ENCODE measurements at regions of chr16 and their contacts with region 1.

Region 1: DNA sequence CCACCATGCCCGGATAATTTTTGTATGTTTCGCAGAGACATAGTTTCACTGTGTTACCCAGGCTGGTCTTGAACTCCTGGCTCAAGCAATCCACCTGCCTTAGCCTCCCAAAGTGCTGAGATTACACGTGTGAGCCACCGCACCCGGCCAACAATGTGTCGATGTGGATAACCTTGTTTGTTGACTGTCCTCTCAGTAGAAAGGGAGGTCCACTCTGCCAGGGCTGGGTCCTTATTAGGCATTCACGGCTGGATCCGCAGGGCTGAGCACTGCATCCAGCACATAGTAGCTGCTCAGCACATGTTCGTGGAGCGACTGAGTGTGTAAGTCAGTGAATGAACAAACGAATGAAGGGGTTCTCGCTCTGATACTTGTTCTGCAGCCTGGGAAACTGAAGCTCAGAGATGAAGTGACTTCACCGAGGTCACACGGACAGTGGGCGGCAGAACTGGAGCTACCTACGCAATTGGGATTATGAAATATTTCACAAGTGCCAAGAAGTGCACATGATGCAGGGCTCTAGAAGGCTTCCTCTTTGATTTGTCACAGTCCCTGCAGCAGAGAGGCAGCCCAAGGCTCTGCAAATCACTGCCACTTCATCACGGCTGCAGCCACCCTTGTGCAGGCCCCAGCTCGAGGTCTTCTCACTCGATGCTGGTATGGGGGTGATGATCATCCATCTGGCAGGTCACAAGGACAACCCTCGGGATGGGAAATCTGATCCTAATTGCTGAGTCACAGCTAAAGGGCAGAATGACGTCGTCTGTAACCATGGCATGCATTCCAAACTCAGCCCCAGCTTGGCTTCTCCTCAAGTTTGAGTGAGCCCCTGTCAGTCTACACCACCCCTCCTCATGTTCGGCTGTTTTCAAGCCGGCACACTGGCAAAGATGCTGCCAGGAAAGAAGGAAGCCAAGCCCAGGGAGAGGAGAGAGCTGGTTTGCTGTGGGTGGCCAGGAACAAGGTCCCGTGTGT is 28.0 kb upstream of the SNN start:
- DNase-seq: peak; percentile 62
- H3K4me3 ChIP-seq: no peak overlapping the region
- H3K27ac ChIP-seq: peak overlapping the region; percentile 71 to 83 (median 79)
- H3K4me1 ChIP-seq: peaks cover 5 to 30% (median 17%) of the 10 kb centered on the region in 4 donors
- H3K27me3 ChIP-seq: no peaks in the 10 kb centered on the region
- CTCF ChIP-seq: no peak
- EP300 ChIP-seq: no peak
- POLR2A ChIP-seq: peak; percentile 41

Region 2: GRCh38 chr16:10812312-10813098 is 827.7 kb before region 1 on chr16:
- in situ Hi-C with region 1: no loop called
- intact Hi-C with region 1: no loop called
- DNase-seq: no peak
- H3K4me3 ChIP-seq: no peak overlapping the region
- H3K27ac ChIP-seq: no peak overlapping the region
- H3K4me1 ChIP-seq: no peaks in the 10 kb centered on the region
- H3K27me3 ChIP-seq: peaks cover under 1% of the 10 kb centered on the region
- CTCF ChIP-seq: no peak
- EP300 ChIP-seq: no peak
- POLR2A ChIP-seq: no peak

Region 3: DNA sequence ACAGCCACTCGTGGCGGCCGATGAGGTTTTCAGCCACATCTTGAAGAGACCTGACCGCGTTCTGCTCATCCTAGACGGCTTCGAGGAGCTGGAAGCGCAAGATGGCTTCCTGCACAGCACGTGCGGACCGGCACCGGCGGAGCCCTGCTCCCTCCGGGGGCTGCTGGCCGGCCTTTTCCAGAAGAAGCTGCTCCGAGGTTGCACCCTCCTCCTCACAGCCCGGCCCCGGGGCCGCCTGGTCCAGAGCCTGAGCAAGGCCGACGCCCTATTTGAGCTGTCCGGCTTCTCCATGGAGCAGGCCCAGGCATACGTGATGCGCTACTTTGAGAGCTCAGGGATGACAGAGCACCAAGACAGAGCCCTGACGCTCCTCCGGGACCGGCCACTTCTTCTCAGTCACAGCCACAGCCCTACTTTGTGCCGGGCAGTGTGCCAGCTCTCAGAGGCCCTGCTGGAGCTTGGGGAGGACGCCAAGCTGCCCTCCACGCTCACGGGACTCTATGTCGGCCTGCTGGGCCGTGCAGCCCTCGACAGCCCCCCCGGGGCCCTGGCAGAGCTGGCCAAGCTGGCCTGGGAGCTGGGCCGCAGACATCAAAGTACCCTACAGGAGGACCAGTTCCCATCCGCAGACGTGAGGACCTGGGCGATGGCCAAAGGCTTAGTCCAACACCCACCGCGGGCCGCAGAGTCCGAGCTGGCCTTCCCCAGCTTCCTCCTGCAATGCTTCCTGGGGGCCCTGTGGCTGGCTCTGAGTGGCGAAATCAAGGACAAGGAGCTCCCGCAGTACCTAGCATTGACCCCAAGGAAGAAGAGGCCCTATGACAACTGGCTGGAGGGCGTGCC is 733.1 kb before region 1 on chr16:
- in situ Hi-C with region 1: no loop called
- intact Hi-C with region 1: no loop called
- DNase-seq: no peak
- H3K4me3 ChIP-seq: no peak overlapping the region
- H3K27ac ChIP-seq: no peak overlapping the region
- H3K4me1 ChIP-seq: no peaks in the 10 kb centered on the region
- H3K27me3 ChIP-seq: no peaks in the 10 kb centered on the region
- CTCF ChIP-seq: no peak
- EP300 ChIP-seq: no peak
- POLR2A ChIP-seq: no peak

Region 4: DNA sequence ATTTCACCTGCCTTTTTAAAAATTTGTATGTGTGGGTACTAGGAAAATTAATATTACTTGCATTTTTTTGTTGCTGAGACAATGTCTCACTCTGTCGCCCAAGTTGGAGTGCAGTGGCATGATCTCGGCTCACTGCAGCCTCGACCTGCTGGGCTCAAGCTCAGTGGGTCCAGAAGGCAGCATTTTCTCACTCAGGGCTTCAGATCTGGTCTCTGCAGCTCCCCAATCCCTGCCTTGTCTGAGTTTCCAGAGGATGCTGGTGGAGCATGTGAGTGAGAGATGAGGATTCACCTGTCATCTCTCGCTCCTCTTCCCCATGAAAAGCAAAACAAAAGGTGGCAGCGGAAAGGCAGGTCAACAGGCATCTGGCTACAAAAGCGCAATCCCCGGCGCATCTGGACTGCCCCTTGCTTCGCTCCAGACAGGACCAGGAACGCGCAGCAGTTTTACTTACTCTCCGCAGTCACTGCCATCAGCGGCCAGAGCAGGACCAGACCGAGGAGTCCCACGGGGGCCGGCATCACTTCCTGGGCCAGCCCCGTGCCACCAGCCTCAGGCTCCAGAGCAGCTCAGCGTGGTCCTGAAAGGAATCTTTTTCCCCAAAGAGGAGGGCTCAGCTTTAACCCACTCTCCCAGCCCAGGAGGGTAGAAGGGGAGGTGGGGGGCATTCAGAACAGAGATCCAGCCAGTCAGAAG is 113.4 kb before region 1 on chr16:
- in situ Hi-C with region 1: loop called in 3 of 4 experiments (anchors 5 kb)
- intact Hi-C with region 1: no loop called
- DNase-seq: no peak
- H3K4me3 ChIP-seq: no peak overlapping the region
- H3K27ac ChIP-seq: no peak overlapping the region
- H3K4me1 ChIP-seq: no peaks in the 10 kb centered on the region
- H3K27me3 ChIP-seq: peaks cover 6% of the 10 kb centered on the region
- CTCF ChIP-seq: no peak
- EP300 ChIP-seq: no peak
- POLR2A ChIP-seq: no peak

Region 5: GRCh38 chr16:11535471-11535870 is 104.7 kb before region 1 on chr16:
- in situ Hi-C with region 1: loop called in 3 of 4 experiments (anchors 5 to 10 kb)
- intact Hi-C with region 1: loop called (anchors 5 kb)
- DNase-seq: peak; percentile 34
- H3K4me3 ChIP-seq: no peak overlapping the region
- H3K27ac ChIP-seq: peak overlapping the region in 3 of 4 donors; percentile 10 to 53 (median 36)
- H3K4me1 ChIP-seq: peaks cover 0 to 26% (median 11%) of the 10 kb centered on the region in 4 donors
- H3K27me3 ChIP-seq: no peaks in the 10 kb centered on the region
- CTCF ChIP-seq: no peak
- EP300 ChIP-seq: no peak
- POLR2A ChIP-seq: no peak

Region 6: DNA sequence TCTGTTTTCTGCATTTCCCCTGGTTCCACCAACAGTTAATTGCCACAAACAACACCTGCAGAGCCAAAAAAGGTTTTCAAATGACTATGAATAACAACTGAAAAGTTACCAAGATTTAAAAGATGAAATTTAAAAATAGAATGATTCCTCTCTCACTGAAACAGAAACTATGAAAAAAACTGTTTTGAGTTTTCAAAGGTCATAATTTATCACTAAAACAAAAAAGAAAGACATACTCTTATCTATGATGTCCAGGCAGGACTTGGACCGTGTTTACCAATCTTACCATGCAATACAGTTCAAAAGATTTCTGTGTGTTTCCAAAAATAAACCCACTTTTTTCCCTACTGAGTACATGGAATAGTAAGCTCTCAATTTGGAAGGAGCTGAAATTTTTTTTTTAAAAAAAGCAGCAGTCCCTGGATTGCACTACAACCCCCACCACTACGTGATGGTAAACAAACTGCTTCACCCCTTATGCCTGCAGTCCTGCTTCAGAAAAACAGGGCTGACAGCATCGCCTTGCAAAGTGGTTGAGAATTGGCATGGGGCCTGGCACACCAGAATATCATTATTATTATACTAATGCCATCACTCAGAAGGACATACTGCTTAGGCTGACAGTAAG is 93.9 kb after region 1 on chr16:
- in situ Hi-C with region 1: no loop called
- intact Hi-C with region 1: no loop called
- DNase-seq: peak; percentile 4
- H3K4me3 ChIP-seq: no peak overlapping the region
- H3K27ac ChIP-seq: peak overlapping the region in 3 of 4 donors; percentile 8 to 53 (median 34)
- H3K4me1 ChIP-seq: peaks cover 0 to 43% (median 10%) of the 10 kb centered on the region in 4 donors
- H3K27me3 ChIP-seq: no peaks in the 10 kb centered on the region
- CTCF ChIP-seq: no peak
- EP300 ChIP-seq: no peak
- POLR2A ChIP-seq: no peak